Sigmoid colon (tissue), 7 donors: ENCODE measurements at regions of chrX and their contacts with region 1.

Region 1: DNA sequence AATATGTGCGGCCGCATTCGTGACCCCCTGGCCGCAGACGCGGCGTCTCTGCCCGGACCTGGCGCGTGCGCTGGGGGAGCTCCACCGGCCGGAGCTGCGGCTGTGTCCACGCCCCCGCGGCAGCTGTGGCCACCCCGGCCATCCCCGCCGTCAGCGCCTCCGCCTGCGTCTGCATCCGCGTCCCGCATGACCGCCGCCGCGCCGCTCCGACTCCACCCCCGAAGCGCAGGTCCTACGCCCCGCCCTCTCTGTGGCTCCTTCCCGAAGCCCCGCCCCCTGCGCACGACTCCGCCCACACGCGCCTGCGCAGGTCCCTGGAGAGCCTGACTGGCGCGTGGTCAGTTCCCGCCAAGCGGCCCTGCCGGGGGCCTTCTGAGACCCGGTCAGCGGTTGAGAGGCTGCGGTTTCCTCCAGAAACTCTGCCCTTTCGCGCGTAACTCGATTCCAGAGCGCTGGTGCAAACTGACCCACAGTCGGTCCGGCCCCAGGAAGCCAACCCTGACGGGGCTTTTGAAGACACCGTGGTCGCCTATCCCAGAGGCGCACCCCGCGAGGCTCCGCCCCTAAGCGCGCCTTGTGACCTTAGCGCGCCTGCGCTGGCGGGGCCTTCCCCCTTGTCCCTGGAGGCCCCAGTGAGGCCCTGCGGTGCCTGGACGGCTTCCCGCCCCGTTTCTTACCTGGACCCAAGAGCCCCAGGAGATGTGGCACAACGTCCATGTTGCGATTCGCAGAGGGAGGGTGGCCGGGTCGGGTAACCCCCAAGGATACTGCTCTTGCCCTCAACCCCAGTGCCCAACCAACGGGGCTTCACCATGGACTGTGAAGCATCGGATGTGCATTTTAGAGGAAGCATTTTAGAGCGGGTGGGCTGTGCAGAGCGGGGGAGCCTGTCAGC is at the start of gene LAGE3:
- DNase-seq: peak; percentile 96
- H3K4me3 ChIP-seq: peak within 1 kb of the TSS; percentile 37 to 57 (median 56)
- H3K27ac ChIP-seq: peak within 1 kb of the TSS; percentile 82 to 85 (median 84)
- H3K4me1 ChIP-seq: peaks cover 0 to 13% (median 5%) of the 10 kb centered on the region in 4 donors
- H3K27me3 ChIP-seq: no peaks in the 10 kb centered on the region
- CTCF ChIP-seq: no peak
- EP300 ChIP-seq: no peak
- POLR2A ChIP-seq: peak in 1 of 2 donors; percentile 39
- total RNA-seq, gene LAGE3: 15.5 to 32.7 (median 22.4) TPM

Region 2: DNA sequence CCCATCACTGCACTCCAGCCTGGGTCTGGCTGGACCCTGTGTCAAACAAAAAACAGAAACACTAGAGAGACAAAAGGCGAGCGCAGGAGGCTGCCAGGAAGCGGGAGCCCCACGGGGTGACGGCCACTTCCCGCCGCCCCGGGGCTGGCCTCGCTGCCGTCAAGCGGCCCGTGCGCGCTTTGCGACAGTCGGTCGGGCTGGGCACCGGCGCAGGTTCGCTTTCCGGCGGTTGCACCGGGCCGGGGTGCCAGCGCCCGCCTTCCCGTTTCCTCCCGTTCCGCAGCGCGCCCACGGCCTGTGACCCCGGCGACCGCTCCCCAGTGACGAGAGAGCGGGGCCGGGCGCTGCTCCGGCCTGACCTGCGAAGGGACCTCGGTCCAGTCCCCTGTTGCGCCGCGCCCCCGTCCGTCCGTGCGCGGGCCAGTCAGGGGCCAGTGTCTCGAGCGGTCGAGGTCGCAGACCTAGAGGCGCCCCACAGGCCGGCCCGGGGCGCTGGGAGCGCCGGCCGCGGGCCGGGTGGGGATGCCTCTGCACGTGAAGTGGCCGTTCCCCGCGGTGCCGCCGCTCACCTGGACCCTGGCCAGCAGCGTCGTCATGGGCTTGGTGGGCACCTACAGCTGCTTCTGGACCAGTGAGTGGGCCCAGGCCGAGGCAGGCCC is 67.5 kb before region 1 on chrX and contains the start of gene TAFAZZIN:
- intact Hi-C with region 1: loop called (anchors 5 kb)
- DNase-seq: peak; percentile 89
- H3K4me3 ChIP-seq: peak within 1 kb of the TSS; percentile 62 to 86 (median 82)
- H3K27ac ChIP-seq: peak within 1 kb of the TSS; percentile 93 to 94 (median 93)
- H3K4me1 ChIP-seq: peaks cover 0 to 8% (median 7%) of the 10 kb centered on the region in 4 donors
- H3K27me3 ChIP-seq: no peaks in the 10 kb centered on the region
- CTCF ChIP-seq: no peak
- EP300 ChIP-seq: no peak
- POLR2A ChIP-seq: peak; percentile 38 to 51
- total RNA-seq, gene TAFAZZIN: 35.7 to 58.2 (median 36.6) TPM

Region 3: DNA sequence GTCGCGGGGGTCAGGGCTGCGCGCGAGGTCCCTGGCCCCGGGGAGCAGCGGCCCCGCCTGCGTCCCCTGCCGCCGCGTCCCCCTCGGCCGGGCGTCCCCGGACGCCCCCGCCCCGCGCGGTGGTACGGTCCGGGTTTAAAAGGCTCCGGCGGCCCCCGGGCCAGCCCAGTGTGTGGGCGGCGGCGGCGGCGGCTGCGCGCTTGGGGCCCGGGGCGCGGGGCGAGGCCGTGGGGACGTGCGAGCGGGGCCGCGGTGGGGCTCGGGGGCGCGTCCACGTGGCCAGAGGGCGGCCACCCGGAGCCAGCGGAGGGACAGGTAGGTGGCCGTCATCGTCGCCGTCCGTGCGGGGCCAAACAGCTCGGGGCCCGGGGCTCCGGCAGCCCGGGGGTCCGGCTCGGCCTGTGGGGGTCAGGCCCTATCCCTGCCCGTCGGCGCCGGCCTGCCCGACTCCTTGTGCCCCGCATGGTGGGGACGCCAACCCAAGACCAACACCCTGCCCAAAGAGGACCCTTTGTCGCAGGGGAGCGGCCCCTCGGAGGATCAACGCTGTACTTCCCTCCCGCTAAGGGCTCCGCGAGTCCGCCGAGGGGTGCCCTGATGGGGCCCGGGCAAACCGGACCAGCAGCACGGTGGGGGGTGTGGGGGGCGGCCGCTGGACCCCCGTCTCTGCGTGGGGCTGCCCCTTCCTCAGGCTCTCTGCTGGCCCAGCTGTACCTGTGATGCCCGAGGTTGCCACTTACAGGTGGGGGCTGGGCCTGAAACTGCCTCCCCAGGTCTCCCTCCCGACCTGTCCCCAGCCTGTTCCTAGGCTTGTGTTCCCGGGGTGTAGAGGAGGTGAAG is 20.6 kb before region 1 on chrX and contains the start of gene PLXNA3:
- intact Hi-C with region 1: loop called (anchors 2 kb)
- DNase-seq: no peak
- H3K4me3 ChIP-seq: peak within 1 kb of the TSS; percentile 43 to 76 (median 63)
- H3K27ac ChIP-seq: peak within 1 kb of the TSS; percentile 66 to 76 (median 73)
- H3K4me1 ChIP-seq: peaks cover 0 to 15% (median 11%) of the 10 kb centered on the region in 4 donors
- H3K27me3 ChIP-seq: no peaks in the 10 kb centered on the region
- CTCF ChIP-seq: no peak
- EP300 ChIP-seq: no peak
- POLR2A ChIP-seq: no peak
- total RNA-seq, gene PLXNA3: 3.1 to 12.7 (median 5.9) TPM

Region 4: GRCh38 chrX:154515878-154516655 is 37.1 kb after region 1 on chrX and contains the start of gene FAM3A:
- intact Hi-C with region 1: loop called (anchors 5 kb)
- DNase-seq: peak; percentile 97
- H3K4me3 ChIP-seq: peak within 1 kb of the TSS; percentile 59 to 67 (median 66)
- H3K27ac ChIP-seq: peak within 1 kb of the TSS; percentile 88 to 95 (median 91)
- H3K4me1 ChIP-seq: peaks cover 0 to 24% (median 17%) of the 10 kb centered on the region in 4 donors
- H3K27me3 ChIP-seq: no peaks in the 10 kb centered on the region
- CTCF ChIP-seq: no peak
- EP300 ChIP-seq: no peak
- POLR2A ChIP-seq: peak; percentile 71 to 76
- total RNA-seq, gene FAM3A: 30.7 to 49.0 (median 40.6) TPM

Region 5: DNA sequence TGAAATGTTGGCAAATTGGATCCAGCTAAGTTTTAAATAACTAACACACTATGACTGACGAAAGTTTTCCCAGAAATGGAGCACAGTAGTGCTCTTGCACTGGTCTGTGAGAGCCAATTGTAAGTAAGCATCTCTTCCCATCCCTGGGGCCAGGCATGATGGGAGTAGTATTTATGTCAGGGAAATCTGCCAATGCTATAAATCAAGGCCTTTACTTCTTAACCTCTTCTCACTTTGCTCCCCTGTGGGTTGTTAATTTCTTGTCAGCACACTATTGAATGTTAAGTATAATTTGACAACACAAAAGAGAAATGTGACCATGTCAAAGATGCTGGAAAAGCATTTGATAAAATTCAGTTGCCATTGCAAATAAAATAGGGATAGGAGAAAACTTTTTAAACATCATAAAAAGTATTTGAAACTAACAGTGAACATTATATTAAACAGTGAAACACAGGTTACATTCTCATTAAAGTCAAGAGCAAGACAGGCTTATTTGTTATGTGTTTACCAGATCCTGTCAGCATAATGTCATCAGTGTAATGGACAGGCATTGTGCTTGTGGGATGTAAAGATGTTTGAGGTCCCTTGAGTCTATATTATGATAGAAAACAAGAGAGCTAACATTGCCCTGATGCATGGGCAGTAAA is 412.1 kb after region 1 on chrX:
- intact Hi-C with region 1: no loop called
- DNase-seq: no peak
- H3K4me3 ChIP-seq: no peak overlapping the region
- H3K27ac ChIP-seq: no peak overlapping the region
- H3K4me1 ChIP-seq: peaks cover 0 to 9% (median 2%) of the 10 kb centered on the region in 4 donors
- H3K27me3 ChIP-seq: no peaks in the 10 kb centered on the region
- CTCF ChIP-seq: no peak
- EP300 ChIP-seq: no peak
- POLR2A ChIP-seq: no peak